Vagina (tissue), 2 donors: ENCODE measurements at regions of chr14 and their contacts with region 1.

Region 1: DNA sequence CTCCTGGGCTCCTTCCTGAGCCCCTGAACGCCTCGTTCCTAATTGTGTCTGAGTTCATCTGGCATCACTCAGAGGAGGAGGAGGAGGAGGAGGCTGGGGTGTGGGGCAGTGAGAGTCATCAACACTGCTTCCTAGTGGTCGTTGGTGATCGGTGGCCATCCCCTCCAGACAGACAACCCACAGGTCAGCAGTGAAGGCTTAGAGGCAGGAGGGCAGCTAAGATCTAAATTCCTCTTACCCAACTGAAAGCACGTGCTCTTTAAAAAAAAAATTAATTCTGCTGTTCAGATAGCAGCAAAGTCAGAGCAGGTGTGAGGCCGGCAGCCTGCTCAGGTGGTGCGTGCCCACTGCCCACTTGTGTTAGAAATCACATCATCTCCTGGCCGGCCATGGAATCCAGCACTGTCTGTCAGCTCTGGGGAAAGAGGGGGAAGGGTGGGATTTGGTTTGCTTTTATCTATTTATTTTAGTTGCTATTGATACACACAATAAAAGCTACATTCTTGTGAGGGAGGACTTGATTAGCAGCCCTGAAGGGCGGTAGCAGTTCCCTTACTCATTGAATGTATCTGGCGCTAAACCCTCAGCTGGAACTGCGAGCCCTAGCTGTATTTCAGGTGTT is 46.6 kb downstream of the PPP2R5C start:
- DNase-seq: no peak
- H3K4me3 ChIP-seq: no peak overlapping the region
- H3K27ac ChIP-seq: peak overlapping the region; percentile 99
- H3K4me1 ChIP-seq: peaks cover 26% of the 10 kb centered on the region
- H3K27me3 ChIP-seq: no peaks in the 10 kb centered on the region
- CTCF ChIP-seq: no peak
- POLR2A ChIP-seq: no peak

Region 2: GRCh38 chr14:101019990-101020710 is 788.0 kb before region 1 on chr14:
- intact Hi-C with region 1: no loop called
- DNase-seq: peak; percentile 70 to 81
- H3K4me3 ChIP-seq: no peak overlapping the region
- H3K27ac ChIP-seq: no peak overlapping the region
- H3K4me1 ChIP-seq: no peaks in the 10 kb centered on the region
- H3K27me3 ChIP-seq: no peaks in the 10 kb centered on the region
- CTCF ChIP-seq: no peak
- POLR2A ChIP-seq: no peak

Region 3: DNA sequence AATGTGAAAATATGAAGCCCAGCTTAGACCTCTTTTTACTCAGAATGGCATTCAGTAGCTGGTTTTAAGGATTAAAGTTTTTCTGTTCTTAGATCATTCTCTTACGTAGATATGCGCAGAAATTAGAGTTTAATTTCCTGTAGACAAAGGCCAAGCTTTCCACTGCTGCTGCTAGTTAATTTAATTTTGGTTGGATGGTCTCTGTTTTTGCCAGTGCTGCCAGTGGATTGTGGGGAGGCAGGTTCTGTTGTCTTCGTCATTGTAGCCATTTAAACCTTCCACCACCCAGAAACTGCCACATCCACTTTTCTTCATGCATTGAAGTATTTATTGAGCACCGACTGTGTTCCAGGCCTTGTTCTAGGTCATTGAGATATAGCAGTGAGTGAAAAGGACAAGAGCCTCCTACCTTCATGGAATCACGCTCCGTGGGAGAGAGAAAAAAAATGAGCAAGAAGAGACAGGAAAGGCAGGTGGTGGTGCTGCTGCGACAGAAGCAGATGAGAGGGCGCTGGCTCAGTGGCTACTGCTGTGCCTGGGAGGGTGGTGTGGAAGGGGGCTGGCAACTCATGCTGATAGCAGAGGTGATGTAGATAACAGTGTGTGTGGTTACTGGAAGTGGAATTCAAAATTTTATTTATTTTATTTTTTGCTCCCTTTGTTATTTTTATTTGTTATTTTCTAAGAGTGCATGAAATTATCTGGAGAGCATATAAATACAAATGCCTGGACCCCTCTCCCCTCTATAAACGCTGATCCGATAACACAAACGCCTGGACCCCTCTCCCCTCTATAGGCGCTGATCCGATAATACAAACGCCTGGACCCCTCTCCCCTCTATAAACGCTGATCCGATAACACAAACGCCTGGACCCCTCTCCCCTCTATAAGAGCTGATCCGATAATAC is 189.6 kb after region 1 on chr14:
- intact Hi-C with region 1: no loop called
- DNase-seq: no peak
- H3K4me3 ChIP-seq: no peak overlapping the region
- H3K27ac ChIP-seq: no peak overlapping the region
- H3K4me1 ChIP-seq: no peaks in the 10 kb centered on the region
- H3K27me3 ChIP-seq: no peaks in the 10 kb centered on the region
- CTCF ChIP-seq: no peak
- POLR2A ChIP-seq: no peak

Region 4: GRCh38 chr14:103141119-103141796 is 1333.1 kb after region 1 on chr14:
- intact Hi-C with region 1: loop called (anchors 5 kb)
- DNase-seq: no peak
- H3K4me3 ChIP-seq: no peak overlapping the region
- H3K27ac ChIP-seq: no peak overlapping the region
- H3K4me1 ChIP-seq: peaks cover 36% of the 10 kb centered on the region
- H3K27me3 ChIP-seq: no peaks in the 10 kb centered on the region
- CTCF ChIP-seq: peak in 2 of 3 experiments; percentile 30 to 43
- POLR2A ChIP-seq: no peak